ENCODE measurements at regions of chr15 and their contacts with region 1.

Region 1: GRCh38 chr15:81265944-81266775 is 57.8 kb downstream of the STARD5 start:
- DNase-seq: peak; percentile 74
- ATAC-seq: peak; percentile 95
- H3K4me3 ChIP-seq: peak overlapping the region; percentile 10 to 25; a peak in 3 of 4 replicates
- H3K27ac ChIP-seq: no peak overlapping the region
- H3K4me1 ChIP-seq: peaks cover 5 to 10% of the 10 kb centered on the region in 2 experiments
- H3K27me3 ChIP-seq: no peaks in the 10 kb centered on the region
- CTCF ChIP-seq: peak; percentile 86 to 95 (median 92)
- POLR2A ChIP-seq: no peak
- RAD21 ChIP-seq: peak; percentile 92

Region 2: GRCh38 chr15:80455668-80456442 is 810.3 kb before region 1 on chr15:
- CTCF ChIA-PET with region 1: interaction called, 4 read pairs
- POLR2A ChIA-PET with region 1: no interaction called
- RAD21 ChIA-PET with region 1: no interaction called
- intact Hi-C with region 1: loop called (anchors 5 kb)
- DNase-seq: peak; percentile 44
- ATAC-seq: peak; percentile 89
- H3K4me3 ChIP-seq: no peak overlapping the region
- H3K27ac ChIP-seq: no peak overlapping the region
- H3K4me1 ChIP-seq: peaks cover 4 to 8% of the 10 kb centered on the region in 2 experiments; a peak in 3 of 4 replicates
- H3K27me3 ChIP-seq: no peaks in the 10 kb centered on the region
- CTCF ChIP-seq: peak; percentile 88 to 95 (median 89)
- POLR2A ChIP-seq: no peak
- RAD21 ChIP-seq: peak; percentile 94

Region 3: DNA sequence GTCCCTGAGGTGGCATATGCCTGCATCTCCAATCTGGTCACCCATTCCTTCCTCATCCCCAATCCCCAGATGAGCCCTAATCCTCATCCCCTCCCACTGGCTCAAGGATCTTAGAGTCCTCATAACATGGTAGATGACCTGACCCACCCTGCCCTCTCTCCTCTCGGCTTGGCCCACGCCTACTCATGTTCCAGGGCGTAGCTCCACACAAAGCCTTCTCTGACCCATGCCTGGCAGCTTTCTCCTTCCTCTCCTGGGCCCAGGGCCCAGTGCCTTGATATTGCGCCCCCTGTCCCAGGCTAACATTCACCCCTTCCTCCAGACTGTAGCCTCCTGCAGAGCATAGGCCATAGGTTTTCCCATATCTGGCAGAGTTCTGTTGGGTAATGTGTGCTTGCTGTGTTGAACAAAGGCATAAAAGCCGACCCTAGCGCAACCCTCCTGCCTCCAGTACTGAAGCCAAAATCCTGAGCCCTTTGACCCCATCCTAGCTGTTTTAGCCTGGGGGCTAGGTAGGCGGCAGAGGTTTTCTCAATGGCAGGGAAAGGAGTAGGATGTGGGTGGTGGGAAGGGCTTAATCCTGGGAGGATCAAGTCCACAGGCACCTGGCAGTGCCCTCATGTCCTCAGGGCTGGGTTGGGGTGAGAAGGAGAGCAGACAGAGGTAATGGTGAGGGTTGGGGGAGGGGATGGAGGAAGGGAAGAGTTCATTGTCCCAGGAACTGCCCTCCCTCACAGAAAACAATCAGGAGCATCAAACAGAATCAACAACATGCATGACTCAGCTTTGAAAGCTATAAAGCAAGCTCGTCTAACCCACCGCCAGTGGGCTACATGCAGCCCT is 312.0 kb before region 1 on chr15:
- CTCF ChIA-PET with region 1: no interaction called
- POLR2A ChIA-PET with region 1: no interaction called
- RAD21 ChIA-PET with region 1: no interaction called
- intact Hi-C with region 1: no loop called
- DNase-seq: no peak
- ATAC-seq: no peak
- H3K4me3 ChIP-seq: no peak overlapping the region
- H3K27ac ChIP-seq: no peak overlapping the region; the same call in 1 of the 2 replicates
- H3K4me1 ChIP-seq: peaks cover 37 to 44% of the 10 kb centered on the region in 2 experiments
- H3K27me3 ChIP-seq: no peaks in the 10 kb centered on the region
- CTCF ChIP-seq: no peak
- POLR2A ChIP-seq: no peak
- RAD21 ChIP-seq: no peak

Region 4: DNA sequence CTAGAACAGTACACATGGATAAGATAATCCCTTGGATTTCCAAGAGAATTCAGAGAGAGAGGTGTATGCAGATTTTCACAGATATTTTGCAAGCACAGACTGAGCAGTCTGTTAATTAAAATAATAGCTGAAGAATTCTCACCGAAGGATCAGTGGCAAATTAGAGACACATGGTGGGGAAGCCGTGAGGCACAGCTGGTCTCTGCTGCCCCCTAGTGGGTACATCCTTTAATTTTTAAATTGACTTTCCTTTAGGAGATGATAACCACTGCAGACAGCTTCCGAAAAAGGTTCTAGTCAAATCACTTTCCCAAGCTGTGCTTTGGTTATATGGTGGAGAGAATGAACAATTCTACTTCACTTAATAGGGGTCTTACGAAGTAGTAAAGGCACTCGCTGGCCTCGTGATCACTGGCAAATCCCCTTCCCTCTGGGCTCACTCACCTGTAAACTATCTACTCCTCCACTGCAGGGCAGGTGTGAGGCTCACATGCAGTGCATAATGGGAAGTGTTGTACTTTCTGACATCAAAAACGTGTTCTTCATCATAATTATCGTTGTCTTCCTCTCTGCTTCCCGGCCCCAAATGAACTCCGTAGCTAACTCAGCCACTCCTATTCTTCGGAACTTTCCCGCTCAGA is 296.0 kb before region 1 on chr15:
- CTCF ChIA-PET with region 1: interaction called, 88 read pairs
- POLR2A ChIA-PET with region 1: no interaction called
- RAD21 ChIA-PET with region 1: no interaction called
- intact Hi-C with region 1: no loop called
- DNase-seq: peak; percentile 39
- ATAC-seq: peak; percentile 88
- H3K4me3 ChIP-seq: no peak overlapping the region
- H3K27ac ChIP-seq: no peak overlapping the region
- H3K4me1 ChIP-seq: peaks cover 6 to 10% of the 10 kb centered on the region in 2 experiments; a peak in 3 of 4 replicates
- H3K27me3 ChIP-seq: no peaks in the 10 kb centered on the region
- CTCF ChIP-seq: peak; percentile 65 to 89 (median 84)
- POLR2A ChIP-seq: no peak
- RAD21 ChIP-seq: peak; percentile 95

Region 5: DNA sequence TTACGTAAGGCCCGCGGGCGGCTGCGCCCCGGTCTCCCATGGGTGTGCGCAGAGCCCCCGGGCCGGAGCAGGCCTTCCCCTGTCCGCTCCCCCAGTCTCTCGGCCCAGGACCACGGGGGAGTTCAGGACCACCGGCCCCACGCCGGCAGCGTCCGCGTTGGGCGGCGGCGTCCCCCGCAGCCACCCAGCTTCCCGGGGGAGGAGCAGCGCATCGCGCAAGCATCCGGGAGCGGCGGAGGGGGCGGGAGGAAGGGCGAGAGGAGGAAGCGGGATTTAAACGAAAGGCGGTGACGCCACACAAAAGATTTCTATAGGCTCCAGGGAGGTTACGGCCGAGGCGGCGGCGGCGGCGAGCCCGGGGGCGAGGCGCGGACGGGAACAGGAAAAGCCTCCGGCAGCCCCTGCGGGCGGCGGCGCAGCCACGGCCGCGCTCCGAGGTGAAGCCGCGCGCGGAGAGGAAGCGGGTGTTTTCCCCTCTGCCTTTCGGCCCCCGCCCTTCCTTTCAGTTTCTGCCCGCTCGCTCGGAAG is 265.5 kb before region 1 on chr15 and contains the start of gene TLNRD1:
- CTCF ChIA-PET with region 1: interaction called, 18 read pairs
- POLR2A ChIA-PET with region 1: no interaction called
- RAD21 ChIA-PET with region 1: no interaction called
- intact Hi-C with region 1: loop called (anchors 5 kb)
- DNase-seq: peak; percentile 80
- ATAC-seq: peak; percentile 78
- H3K4me3 ChIP-seq: peak within 1 kb of the TSS; percentile 66 to 77
- H3K27ac ChIP-seq: peak within 1 kb of the TSS; percentile 90
- H3K4me1 ChIP-seq: peaks cover 15 to 36% of the 10 kb centered on the region in 2 experiments
- H3K27me3 ChIP-seq: no peaks in the 10 kb centered on the region
- CTCF ChIP-seq: no peak
- POLR2A ChIP-seq: peak; percentile 84
- RAD21 ChIP-seq: no peak
- total RNA-seq, gene TLNRD1: 22.5 TPM

Region 6: DNA sequence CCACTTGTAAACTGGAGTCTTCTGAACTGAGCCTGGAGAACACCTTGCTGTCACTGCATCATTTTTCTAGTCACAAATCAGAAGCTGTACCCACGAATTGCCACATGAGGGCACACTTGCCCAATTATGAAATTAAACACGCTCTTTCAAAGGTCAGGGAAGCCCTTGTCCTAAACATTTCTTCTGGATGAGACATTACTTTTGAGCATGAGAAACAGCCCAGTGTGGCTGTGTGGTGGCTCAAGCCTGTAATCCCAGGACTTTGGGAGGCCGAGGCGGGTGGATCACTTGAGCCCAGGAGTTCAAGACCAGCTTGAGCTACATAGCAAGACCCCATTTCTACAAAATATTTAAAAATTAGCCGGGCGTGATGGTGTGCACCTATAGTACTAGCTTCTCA is 159.6 kb before region 1 on chr15:
- CTCF ChIA-PET with region 1: interaction called, 175 read pairs
- POLR2A ChIA-PET with region 1: interaction called, 5 read pairs
- RAD21 ChIA-PET with region 1: interaction called, 7 to 12 read pairs
- intact Hi-C with region 1: loop called (anchors 1 kb)
- DNase-seq: peak; percentile 60
- ATAC-seq: peak; percentile 81
- H3K4me3 ChIP-seq: no peak overlapping the region
- H3K27ac ChIP-seq: no peak overlapping the region
- H3K4me1 ChIP-seq: peaks cover 0 to 5% of the 10 kb centered on the region in 2 experiments; a peak in 1 of 4 replicates
- H3K27me3 ChIP-seq: peaks cover 19% of the 10 kb centered on the region
- CTCF ChIP-seq: peak; percentile 70 to 75 (median 72)
- POLR2A ChIP-seq: no peak
- RAD21 ChIP-seq: peak; percentile 87

Region 7: DNA sequence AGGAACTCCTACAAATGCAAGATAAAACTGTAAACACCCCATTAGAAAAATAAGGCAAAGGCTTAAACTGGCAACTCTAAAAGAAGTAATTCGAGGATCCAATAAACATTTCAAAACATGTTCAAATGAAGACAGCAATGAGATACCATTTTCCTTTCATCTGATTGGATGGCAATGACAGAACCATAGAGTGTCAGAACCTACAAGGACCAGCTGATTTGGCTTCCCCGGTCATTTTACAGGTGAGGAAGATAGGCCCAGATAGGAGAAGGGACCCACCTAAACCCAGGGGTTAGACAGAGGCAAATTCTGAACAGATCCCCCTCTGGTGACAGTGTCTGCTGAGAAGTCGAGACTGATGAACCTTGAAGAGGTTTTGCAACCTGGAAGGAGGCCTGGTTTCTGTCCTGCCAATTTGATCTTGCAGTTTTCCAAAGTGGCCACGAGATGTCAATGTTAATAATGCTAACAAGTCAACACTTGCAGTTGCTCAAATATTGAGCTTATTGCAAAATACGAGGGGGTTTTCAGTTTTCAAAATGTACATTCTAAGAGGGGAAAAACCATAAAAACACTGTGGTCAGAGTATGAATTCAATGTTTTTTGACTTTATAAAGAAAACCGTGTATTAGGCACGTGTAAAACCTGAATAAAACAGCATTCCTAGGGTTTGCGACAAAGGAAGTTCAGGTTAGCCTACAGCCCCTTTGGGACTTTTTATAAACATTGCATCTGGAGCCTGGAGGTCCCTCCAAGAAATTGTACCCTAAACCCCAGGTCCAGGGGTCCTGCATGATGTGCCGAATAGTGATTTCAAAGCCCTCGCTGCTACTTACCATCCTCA is 110.6 kb before region 1 on chr15:
- CTCF ChIA-PET with region 1: interaction called, 119 read pairs
- POLR2A ChIA-PET with region 1: no interaction called
- RAD21 ChIA-PET with region 1: interaction called, 15 to 20 read pairs
- intact Hi-C with region 1: loop called (anchors 1 kb)
- DNase-seq: peak; percentile 45
- ATAC-seq: peak; percentile 82
- H3K4me3 ChIP-seq: no peak overlapping the region
- H3K27ac ChIP-seq: no peak overlapping the region
- H3K4me1 ChIP-seq: no peaks in the 10 kb centered on the region
- H3K27me3 ChIP-seq: no peaks in the 10 kb centered on the region
- CTCF ChIP-seq: peak; percentile 48 to 71 (median 66)
- POLR2A ChIP-seq: no peak
- RAD21 ChIP-seq: peak; percentile 61

Region 8: GRCh38 chr15:81410318-81410753 is 144.2 kb after region 1 on chr15:
- CTCF ChIA-PET with region 1: interaction called, 12 read pairs
- POLR2A ChIA-PET with region 1: no interaction called
- RAD21 ChIA-PET with region 1: no interaction called
- intact Hi-C with region 1: no loop called
- DNase-seq: peak; percentile 56
- ATAC-seq: peak; percentile 87
- H3K4me3 ChIP-seq: no peak overlapping the region
- H3K27ac ChIP-seq: no peak overlapping the region
- H3K4me1 ChIP-seq: no peaks in the 10 kb centered on the region
- H3K27me3 ChIP-seq: peaks cover 15% of the 10 kb centered on the region
- CTCF ChIP-seq: peak; percentile 36 to 59 (median 52); a peak in 4 of 6 replicates
- POLR2A ChIP-seq: no peak
- RAD21 ChIP-seq: peak; percentile 73